Activated B cell treated with CpG ODN at 0.5 μM for 24 hours (primary cell): ENCODE measurements at regions of chr1 and their contacts with region 1.

Region 1: DNA sequence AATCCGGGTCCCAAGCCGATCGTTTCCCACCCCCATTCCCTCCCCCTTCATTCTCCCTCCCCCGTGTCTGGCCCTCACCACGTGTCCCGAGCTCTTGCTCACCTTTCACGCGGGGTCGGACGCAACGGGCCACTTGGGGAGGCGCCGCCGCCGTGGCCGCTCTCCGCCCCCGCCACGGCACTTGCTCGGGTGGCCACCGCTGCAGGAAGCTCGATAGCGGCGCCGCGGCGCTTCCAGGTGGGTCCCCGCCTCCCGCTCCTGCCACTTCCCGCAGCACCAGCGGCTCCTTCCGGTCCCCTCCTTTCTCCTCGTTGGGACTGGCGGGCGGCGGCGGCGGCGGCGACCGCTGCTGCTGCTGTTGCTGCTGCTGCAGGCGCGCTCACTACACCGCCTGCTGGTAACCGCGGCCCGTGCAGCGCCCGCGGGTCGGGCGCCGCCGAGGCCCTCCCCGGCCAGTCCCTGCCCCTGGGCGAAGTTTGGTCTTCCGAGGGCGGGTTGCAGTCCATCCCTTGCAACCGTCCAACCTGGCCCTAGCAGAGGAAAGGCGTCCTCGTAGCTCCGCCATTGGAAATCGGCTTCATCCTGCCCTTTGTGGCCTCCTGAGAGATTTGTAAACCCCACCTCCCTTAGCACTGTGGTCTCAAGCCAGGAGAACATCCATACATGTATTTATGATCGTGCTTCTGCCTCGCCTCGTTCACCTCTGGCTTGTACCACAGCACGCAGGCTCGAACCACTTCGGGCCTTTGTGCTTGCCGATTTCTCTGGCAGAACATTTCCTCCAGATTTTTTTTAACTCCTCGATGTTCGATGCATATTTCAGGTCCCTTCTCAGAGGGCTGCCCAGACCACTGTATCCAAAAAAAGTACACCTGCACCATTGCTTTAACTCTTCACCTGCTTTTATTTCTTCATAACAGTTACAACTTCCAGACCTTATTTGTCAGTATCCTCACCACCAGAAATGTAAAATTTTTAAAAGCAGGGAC is 996 bp upstream of the ZZZ3 start:
- DNase-seq: peak; percentile 90
- ATAC-seq: peak; percentile 79
- H3K4me3 Mint-ChIP-seq: peak overlapping the region; percentile 91
- H3K27ac Mint-ChIP-seq: peak overlapping the region; percentile 96
- H3K4me1 Mint-ChIP-seq: peaks cover 39% of the 10 kb centered on the region
- H3K27me3 Mint-ChIP-seq: no peaks in the 10 kb centered on the region
- CTCF ChIP-seq: peak; percentile 71

Region 2: GRCh38 chr1:75724472-75725022 is 1958.9 kb before region 1 on chr1 and contains the start of gene ACADM:
- CTCF ChIA-PET with region 1: no interaction called
- POLR2A ChIA-PET with region 1: no interaction called
- intact Hi-C with region 1: loop called (anchors 1 kb)
- DNase-seq: peak; percentile 90
- ATAC-seq: peak; percentile 92
- H3K4me3 Mint-ChIP-seq: peak within 1 kb of the TSS; percentile 100
- H3K27ac Mint-ChIP-seq: peak within 1 kb of the TSS; percentile 94
- H3K4me1 Mint-ChIP-seq: peaks cover 43% of the 10 kb centered on the region
- H3K27me3 Mint-ChIP-seq: no peaks in the 10 kb centered on the region
- CTCF ChIP-seq: no peak
- total RNA-seq, gene ACADM: 49.4 and 49.9 TPM in 2 replicates

Region 3: DNA sequence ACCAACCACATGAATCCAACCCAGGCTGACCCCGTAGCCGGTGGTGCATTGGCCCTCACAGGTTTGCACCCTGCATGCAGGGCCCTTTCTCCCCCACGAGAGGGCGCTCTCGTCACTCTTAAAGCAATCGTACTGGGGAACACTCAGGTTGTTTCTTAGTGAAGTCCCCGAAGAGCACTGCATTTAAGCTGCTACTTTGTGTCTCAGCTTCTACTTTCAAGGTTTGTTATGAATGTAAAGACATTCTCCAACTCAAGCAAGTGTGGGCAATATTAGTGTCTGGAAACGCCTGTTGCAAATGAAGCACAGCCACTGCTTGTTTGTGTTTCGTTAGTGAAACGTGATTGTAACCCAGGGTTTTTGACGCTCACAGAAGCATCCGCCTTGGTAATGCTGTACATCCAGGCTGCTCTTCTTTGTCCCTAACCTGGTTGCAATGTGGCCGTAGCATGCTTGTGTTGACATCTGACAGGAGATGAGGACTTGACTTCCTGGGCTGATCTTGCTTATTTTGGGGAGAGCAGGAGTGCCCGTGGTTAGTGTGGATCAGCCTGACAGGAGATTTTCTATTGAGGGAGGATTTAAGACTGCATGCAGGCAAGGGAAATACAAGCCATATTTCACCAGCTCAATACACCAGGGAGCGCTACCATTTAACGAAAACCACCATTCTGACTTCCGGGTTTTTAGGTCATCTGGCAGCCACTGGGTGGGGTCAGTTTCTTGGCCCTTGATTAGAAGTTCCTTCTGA is 1529.1 kb before region 1 on chr1:
- CTCF ChIA-PET with region 1: no interaction called
- POLR2A ChIA-PET with region 1: no interaction called
- intact Hi-C with region 1: loop called (anchors 2 kb)
- DNase-seq: peak; percentile 60
- ATAC-seq: peak; percentile 91
- H3K4me3 Mint-ChIP-seq: peak overlapping the region; percentile 79
- H3K27ac Mint-ChIP-seq: peak overlapping the region; percentile 42
- H3K4me1 Mint-ChIP-seq: peaks cover 17% of the 10 kb centered on the region
- H3K27me3 Mint-ChIP-seq: peaks cover 4% of the 10 kb centered on the region
- CTCF ChIP-seq: peak; percentile 59

Region 4: DNA sequence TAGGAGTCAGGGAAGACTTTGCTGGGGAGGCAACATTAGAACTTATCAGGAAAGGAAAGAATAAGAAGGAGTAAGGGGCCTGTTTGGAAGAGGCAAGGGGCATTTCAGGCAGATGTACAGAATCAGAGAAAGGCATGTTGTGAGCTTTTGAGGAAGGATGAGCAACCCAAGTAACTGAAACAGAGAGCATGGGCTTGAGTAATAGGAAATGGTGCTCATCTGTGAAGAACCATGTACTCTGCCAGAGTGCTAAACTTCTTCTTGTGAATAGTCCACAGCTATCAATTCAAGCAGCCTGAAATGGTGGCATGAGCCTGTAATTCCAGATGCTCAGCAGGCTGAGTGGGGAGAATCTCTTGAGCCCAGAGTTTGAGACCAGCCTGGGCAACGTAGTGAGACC is 445.0 kb before region 1 on chr1:
- CTCF ChIA-PET with region 1: no interaction called
- POLR2A ChIA-PET with region 1: no interaction called
- intact Hi-C with region 1: no loop called
- DNase-seq: no peak
- ATAC-seq: no peak
- H3K4me3 Mint-ChIP-seq: no peak overlapping the region
- H3K27ac Mint-ChIP-seq: no peak overlapping the region
- H3K4me1 Mint-ChIP-seq: no peaks in the 10 kb centered on the region
- H3K27me3 Mint-ChIP-seq: peaks cover 13% of the 10 kb centered on the region
- CTCF ChIP-seq: no peak

Region 5: GRCh38 chr1:77539519-77540142 is 143.8 kb before region 1 on chr1:
- CTCF ChIA-PET with region 1: no interaction called
- POLR2A ChIA-PET with region 1: interaction called, 6 read pairs
- intact Hi-C with region 1: loop called (anchors 1 kb)
- DNase-seq: no peak
- ATAC-seq: no peak
- H3K4me3 Mint-ChIP-seq: peak overlapping the region; percentile 59
- H3K27ac Mint-ChIP-seq: peak overlapping the region; percentile 88
- H3K4me1 Mint-ChIP-seq: peaks cover 31% of the 10 kb centered on the region
- H3K27me3 Mint-ChIP-seq: no peaks in the 10 kb centered on the region
- CTCF ChIP-seq: no peak

Region 6: DNA sequence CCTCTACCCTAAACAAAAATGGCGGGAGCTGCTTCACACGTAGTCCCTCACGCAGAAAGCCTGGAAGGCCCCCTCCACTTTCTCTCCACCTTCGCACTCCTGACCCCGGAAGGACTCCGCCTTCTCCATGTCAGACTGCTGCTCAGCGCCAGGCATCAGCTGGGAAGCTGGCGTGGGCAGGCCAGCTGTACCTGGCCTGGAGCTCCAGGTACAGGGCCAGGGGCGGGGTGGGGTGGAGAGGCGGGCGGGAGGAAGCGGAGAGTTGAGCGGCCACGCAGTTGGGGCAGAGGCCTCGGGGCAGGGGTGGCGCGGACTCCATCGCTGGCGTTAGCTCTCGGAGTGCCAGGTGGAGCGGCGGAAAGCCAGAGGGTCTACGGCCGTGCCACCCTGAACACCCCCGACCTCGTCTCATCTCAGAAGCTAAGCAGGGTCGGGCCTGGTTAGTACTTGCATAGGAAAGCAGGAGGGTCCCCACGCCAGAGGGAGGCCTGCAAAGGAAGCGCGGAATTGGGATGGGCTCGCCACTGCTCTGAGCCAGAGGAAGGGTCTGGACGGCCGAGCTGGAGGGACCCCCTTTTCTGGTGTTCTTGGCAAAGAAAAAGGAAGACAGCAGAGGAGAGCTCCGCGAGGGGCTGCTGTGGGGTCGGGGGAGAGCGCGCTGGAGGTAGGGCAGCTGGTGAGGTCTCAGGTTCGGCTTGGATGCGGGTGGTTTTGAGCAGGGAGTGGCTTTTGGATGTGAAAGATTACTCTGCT is 96.3 kb after region 1 on chr1 and contains the start of gene MIGA1:
- CTCF ChIA-PET with region 1: no interaction called
- POLR2A ChIA-PET with region 1: interaction called, 27 read pairs
- intact Hi-C with region 1: loop called (anchors 1 kb)
- DNase-seq: peak; percentile 69
- ATAC-seq: peak; percentile 96
- H3K4me3 Mint-ChIP-seq: peak within 1 kb of the TSS; percentile 92
- H3K27ac Mint-ChIP-seq: peak within 1 kb of the TSS; percentile 82
- H3K4me1 Mint-ChIP-seq: peaks cover 28% of the 10 kb centered on the region
- H3K27me3 Mint-ChIP-seq: no peaks in the 10 kb centered on the region
- CTCF ChIP-seq: no peak
- total RNA-seq, gene MIGA1: 11.1 and 13.0 TPM in 2 replicates

Region 7: DNA sequence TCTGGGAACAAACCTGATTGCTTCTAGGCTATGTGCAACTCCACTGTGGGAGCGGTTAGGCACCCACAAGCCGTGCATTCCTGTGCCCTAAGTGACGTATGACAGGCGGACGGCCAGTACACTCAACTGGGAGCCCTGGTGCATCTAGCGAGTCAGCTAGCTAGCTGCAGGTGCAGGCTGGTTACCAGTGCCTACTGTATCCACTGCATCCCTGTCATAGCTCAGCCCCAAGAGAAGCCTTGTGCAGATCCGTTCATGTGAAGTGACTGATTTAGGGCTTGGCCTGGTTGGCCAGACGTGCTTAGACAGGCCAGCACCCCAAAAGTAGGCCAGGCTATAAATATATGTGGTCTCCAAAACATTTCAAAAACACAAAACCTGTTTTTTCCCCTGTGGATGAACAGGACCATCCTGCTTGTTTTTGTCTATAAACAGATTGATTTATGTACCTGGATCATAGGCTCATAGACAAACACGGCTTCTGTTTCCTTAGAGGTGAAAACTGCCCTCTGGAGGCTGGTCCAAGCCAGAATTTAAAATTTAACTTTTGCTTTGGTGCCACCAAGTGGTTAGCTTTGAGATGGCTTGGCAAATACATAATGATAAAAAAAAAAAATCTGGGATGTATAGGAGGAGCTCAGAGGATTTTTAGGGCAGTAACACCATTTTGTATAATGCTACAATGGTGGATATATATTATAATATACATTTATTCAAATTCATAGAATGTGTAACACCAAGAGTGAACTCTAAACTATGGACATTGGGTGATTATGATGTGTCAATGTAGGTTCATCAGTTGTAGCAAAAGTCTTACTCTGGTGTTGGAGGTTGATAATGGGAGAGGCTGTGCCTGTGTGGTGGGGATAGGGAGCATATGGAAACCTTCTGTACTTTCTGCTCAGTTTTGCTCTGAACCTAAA is 430.8 kb after region 1 on chr1:
- CTCF ChIA-PET with region 1: no interaction called
- POLR2A ChIA-PET with region 1: no interaction called
- intact Hi-C with region 1: loop called (anchors 1 kb)
- DNase-seq: no peak
- ATAC-seq: peak; percentile 75
- H3K4me3 Mint-ChIP-seq: no peak overlapping the region
- H3K27ac Mint-ChIP-seq: no peak overlapping the region
- H3K4me1 Mint-ChIP-seq: no peaks in the 10 kb centered on the region
- H3K27me3 Mint-ChIP-seq: peaks cover 1% of the 10 kb centered on the region
- CTCF ChIP-seq: peak; percentile 66